ENCODE measurements at regions of chr15 and their contacts with region 1.

Region 1: DNA sequence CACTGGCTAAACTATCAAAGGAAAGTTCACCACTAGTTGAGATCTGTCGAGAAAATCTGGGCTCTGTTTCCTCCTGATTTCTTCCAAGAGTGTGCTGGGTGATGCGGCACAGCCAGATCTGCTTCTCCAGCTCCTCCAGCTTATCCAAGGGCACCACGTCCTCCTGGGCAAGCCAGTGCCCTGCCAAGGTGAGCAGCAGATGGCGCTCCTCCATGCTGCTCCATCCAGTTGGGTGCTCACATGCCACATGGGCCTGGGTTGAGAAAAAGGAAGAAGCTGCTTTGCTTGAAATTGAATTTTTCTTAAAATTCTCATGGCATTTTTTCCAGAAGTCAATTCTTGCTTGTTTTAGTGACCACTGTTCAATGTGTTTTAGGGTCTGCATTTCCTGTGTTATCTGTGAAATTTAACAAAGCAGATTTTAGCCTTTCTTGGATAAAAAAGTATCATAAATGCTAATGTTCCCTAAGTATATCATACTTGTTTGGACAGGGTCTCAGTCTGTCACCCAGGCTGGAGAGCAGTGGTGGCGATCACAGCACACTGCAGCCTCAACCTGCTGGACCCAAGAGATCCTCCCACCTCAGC is 47.3 kb downstream of the EIF3J start:
- DNase-seq: peak; percentile 56
- H3K4me3 Mint-ChIP-seq: no peak overlapping the region
- H3K27ac Mint-ChIP-seq: no peak overlapping the region
- H3K4me1 Mint-ChIP-seq: no peaks in the 10 kb centered on the region
- H3K27me3 Mint-ChIP-seq: no peaks in the 10 kb centered on the region
- CTCF ChIP-seq: no peak

Region 2: GRCh38 chr15:44489464-44489863 is 94.8 kb before region 1 on chr15:
- CTCF ChIA-PET with region 1: no interaction called
- intact Hi-C with region 1: no loop called
- DNase-seq: no peak
- H3K4me3 Mint-ChIP-seq: no peak overlapping the region
- H3K27ac Mint-ChIP-seq: no peak overlapping the region
- H3K4me1 Mint-ChIP-seq: peaks cover 30% of the 10 kb centered on the region
- H3K27me3 Mint-ChIP-seq: no peaks in the 10 kb centered on the region
- CTCF ChIP-seq: no peak

Region 3: DNA sequence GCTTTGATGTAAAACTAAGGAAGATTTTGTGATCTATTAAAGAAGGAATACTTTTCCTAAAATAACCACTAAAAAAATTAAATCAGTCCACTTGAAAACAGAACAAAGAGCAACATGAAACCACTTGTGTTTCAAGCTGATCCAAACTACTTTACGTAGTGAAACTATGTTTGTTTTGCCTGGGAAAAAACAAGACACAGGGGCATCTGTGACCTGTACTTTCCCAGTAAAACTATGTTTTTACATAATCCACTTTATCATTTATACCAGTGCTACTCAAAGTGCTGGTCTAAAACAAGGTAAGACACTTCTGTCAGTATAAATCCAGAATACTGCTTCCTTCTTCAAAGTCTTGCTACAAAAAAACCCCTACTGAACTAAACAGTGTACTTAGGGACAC is 22.5 kb after region 1 on chr15:
- CTCF ChIA-PET with region 1: no interaction called
- intact Hi-C with region 1: no loop called
- DNase-seq: no peak
- H3K4me3 Mint-ChIP-seq: no peak overlapping the region
- H3K27ac Mint-ChIP-seq: no peak overlapping the region
- H3K4me1 Mint-ChIP-seq: no peaks in the 10 kb centered on the region
- H3K27me3 Mint-ChIP-seq: no peaks in the 10 kb centered on the region
- CTCF ChIP-seq: no peak

Region 4: GRCh38 chr15:44738340-44738984 is 154.2 kb after region 1 on chr15:
- CTCF ChIA-PET with region 1: interaction called, 6 read pairs
- intact Hi-C with region 1: loop called (anchors 2 kb)
- DNase-seq: no peak
- H3K4me3 Mint-ChIP-seq: no peak overlapping the region
- H3K27ac Mint-ChIP-seq: no peak overlapping the region
- H3K4me1 Mint-ChIP-seq: no peaks in the 10 kb centered on the region
- H3K27me3 Mint-ChIP-seq: no peaks in the 10 kb centered on the region
- CTCF ChIP-seq: no peak